PC-9 (cell line): ENCODE measurements at regions of chr2 and their contacts with region 1.

Region 1: DNA sequence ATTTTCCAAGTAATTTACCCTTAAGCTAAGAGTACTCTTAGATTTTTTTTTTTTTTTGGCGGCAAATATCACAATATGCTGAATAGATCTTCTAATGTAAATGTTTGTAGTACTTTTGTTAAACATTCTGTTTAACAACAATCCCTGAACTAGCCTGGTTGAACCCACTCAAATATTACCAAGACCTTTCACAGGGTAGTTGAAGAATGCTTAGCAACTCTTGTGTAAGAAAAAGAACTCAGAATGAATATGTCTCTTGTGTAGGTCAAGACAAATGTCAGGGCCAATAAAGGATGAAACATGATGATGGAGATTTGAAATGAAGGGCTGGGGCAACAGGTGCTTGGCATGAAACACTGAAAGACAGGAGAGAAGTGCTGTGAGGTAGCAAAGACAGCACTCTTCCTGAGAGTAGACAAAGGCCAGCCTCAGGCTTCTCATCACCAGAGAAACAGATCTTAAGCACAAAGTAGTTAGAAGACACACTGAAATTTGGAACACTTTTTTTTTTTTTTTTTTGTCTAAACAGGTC is 597.3 kb downstream of the ERBB4 start:
- DNase-seq: no peak
- H3K4me3 ChIP-seq: no peak overlapping the region
- H3K27ac ChIP-seq: no peak overlapping the region
- H3K4me1 ChIP-seq: peaks cover 11% of the 10 kb centered on the region; the same call in 1 of the 2 replicates
- H3K27me3 ChIP-seq: no peaks in the 10 kb centered on the region
- CTCF ChIP-seq: no peak

Region 2: GRCh38 chr2:211789982-211790381 is 151.3 kb before region 1 on chr2:
- CTCF ChIA-PET with region 1: no interaction called
- POLR2A ChIA-PET with region 1: no interaction called
- intact Hi-C with region 1: no loop called
- DNase-seq: no peak
- H3K4me3 ChIP-seq: no peak overlapping the region
- H3K27ac ChIP-seq: no peak overlapping the region
- H3K4me1 ChIP-seq: no peaks in the 10 kb centered on the region
- H3K27me3 ChIP-seq: no peaks in the 10 kb centered on the region
- CTCF ChIP-seq: no peak

Region 3: DNA sequence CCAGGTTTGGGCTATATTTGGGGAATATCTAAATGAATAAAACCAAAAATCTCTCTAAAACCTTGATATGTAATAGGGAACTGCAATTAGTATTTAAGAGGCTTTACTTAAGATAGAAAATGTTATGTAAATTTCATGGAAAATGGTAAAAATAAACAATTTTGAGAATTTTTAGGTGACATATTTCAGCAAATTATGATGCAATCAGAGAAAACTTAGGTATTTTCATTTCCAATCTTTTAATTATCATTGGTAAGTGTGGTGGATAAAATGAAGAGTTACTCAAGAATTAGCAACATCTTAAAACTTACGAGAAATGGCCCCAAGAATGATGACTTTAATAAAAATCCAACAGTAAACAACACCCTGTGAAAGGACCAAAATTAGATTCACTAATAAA is 26.0 kb after region 1 on chr2:
- CTCF ChIA-PET with region 1: no interaction called
- POLR2A ChIA-PET with region 1: interaction called, 18 read pairs
- intact Hi-C with region 1: no loop called
- DNase-seq: no peak
- H3K4me3 ChIP-seq: no peak overlapping the region
- H3K27ac ChIP-seq: no peak overlapping the region
- H3K4me1 ChIP-seq: no peaks in the 10 kb centered on the region
- H3K27me3 ChIP-seq: no peaks in the 10 kb centered on the region
- CTCF ChIP-seq: no peak